Heart left ventricle (tissue), 16 donors: ENCODE measurements at regions of chr11 and their contacts with region 1.

Region 1: GRCh38 chr11:94134651-94135512 is 6.2 kb downstream of the PANX1 start:
- DNase-seq: peak; percentile 76 to 89 (median 82)
- ATAC-seq: peak; percentile 63 to 87 (median 86)
- H3K4me3 ChIP-seq: peak overlapping the region in 3 of 12 donors; percentile 8 to 22 (median 16)
- H3K27ac ChIP-seq: peak overlapping the region; percentile 40 to 96 (median 75)
- H3K4me1 ChIP-seq: peaks cover 0 to 88% (median 68%) of the 10 kb centered on the region in 12 donors
- H3K27me3 ChIP-seq: no peaks in the 10 kb centered on the region
- CTCF ChIP-seq: no peak
- POLR2A ChIP-seq: no peak

Region 2: GRCh38 chr11:94938095-94939055 is 803.5 kb after region 1 on chr11:
- intact Hi-C with region 1: loop called in 1 of 10 experiments (anchors 10 kb)
- DNase-seq: peak; percentile 79 to 89 (median 82)
- ATAC-seq: peak; percentile 79 to 92 (median 84)
- H3K4me3 ChIP-seq: no peak overlapping the region
- H3K27ac ChIP-seq: peak overlapping the region in 11 of 12 donors; percentile 3 to 73 (median 52)
- H3K4me1 ChIP-seq: peaks cover 0 to 39% (median 18%) of the 10 kb centered on the region in 12 donors
- H3K27me3 ChIP-seq: peaks cover 0 to 4% (median 0%) of the 10 kb centered on the region in 9 donors
- CTCF ChIP-seq: no peak
- POLR2A ChIP-seq: no peak